ENCODE measurements at regions of chr21 and their contacts with region 1.

Region 1: DNA sequence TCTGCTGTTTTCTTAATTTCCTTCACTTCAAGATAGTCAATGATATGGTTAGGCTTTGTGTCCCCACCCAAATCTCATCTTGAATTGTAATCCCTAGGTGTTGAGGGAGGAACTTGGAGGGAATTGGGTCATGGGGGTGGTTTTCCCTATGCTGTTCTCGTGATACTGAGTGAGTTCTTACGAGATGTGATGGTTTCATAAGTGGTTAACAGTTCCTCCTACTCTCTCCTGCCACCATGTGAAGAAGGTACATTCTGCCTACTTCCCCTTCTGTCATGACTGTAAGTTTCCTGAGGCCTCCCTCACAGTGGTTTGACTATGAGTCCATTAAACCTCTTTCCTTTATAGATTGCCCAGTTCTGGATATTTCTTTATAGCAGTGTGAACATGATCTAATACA is 74.0 kb upstream of the SAMSN1 start:
- DNase-seq: peak; percentile 26
- H3K4me3 ChIP-seq: no peak overlapping the region
- H3K27ac ChIP-seq: no peak overlapping the region
- H3K4me1 ChIP-seq: peaks cover 29% of the 10 kb centered on the region
- CTCF ChIP-seq: no peak

Region 2: DNA sequence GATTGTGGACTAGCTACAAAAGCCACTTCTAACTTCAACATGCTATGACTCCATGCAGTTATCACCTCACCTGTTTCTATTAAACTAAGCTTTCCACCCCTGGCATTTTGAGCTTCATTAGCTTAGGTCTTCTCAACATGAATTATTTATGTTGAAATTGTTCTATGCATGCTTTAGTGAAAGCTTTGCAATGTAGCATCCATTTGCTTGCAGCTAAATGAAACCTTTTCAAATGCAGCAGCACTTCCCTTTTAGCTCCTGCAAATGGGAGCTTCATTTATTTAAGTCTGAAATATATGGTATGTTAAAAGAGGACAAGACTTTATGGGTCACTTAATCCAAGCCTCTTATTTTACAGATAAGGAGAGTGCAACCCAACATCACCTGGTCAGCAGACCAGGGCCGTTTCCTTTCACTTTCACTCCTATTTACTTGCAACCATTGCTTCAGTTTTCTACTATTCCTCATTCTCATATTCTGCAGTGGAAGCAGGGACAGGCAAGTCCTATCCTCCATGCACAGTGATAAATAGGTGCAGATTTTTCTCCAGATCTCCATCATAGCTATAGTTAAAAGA is 17.7 kb before region 1 on chr21:
- CTCF ChIA-PET with region 1: interaction called, 4 read pairs
- POLR2A ChIA-PET with region 1: interaction called, 26 read pairs
- intact Hi-C with region 1: no loop called
- DNase-seq: peak; percentile 8
- H3K4me3 ChIP-seq: no peak overlapping the region
- H3K27ac ChIP-seq: no peak overlapping the region
- H3K4me1 ChIP-seq: peaks cover 6% of the 10 kb centered on the region
- CTCF ChIP-seq: no peak

Region 3: DNA sequence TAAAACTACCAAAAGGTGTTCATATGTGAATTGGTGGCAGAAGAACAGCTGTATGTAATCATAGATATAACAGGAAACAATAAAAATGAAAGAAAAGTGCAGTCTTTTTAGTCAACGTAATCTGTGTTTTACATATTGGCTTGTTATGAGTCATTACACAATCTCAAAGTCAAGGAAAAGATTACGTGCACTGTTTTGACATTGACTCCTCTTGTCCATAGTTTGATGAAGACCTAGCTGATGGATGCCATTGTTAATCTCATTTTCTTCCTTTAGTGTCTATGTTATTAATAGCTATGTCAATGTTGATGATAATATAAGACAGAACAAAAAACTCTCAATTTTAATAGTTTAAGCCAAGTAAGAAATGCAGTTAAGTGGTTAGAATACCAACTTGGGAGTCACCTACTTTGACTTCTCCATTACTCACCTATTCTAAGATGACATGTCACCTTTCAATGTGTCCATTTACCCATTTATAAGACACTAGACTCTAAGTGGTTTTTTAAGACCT is 10.5 kb after region 1 on chr21:
- CTCF ChIA-PET with region 1: no interaction called
- POLR2A ChIA-PET with region 1: interaction called, 23 read pairs
- intact Hi-C with region 1: no loop called
- DNase-seq: no peak
- H3K4me3 ChIP-seq: no peak overlapping the region
- H3K27ac ChIP-seq: no peak overlapping the region
- H3K4me1 ChIP-seq: no peaks in the 10 kb centered on the region
- CTCF ChIP-seq: no peak

Measured in OCI-LY7 (cell line).